ENCODE measurements at regions of chr19 and their contacts with region 1.

Region 1: GRCh38 chr19:50777754-50778303 is 7.6 kb downstream of the GPR32 start:
- DNase-seq: no peak
- ATAC-seq: no peak
- H3K4me3 Mint-ChIP-seq: no peak overlapping the region
- H3K27ac Mint-ChIP-seq: no peak overlapping the region
- H3K4me1 Mint-ChIP-seq: peaks cover 3% of the 10 kb centered on the region
- H3K27me3 Mint-ChIP-seq: peaks cover 55% of the 10 kb centered on the region
- CTCF ChIP-seq: no peak

Region 2: DNA sequence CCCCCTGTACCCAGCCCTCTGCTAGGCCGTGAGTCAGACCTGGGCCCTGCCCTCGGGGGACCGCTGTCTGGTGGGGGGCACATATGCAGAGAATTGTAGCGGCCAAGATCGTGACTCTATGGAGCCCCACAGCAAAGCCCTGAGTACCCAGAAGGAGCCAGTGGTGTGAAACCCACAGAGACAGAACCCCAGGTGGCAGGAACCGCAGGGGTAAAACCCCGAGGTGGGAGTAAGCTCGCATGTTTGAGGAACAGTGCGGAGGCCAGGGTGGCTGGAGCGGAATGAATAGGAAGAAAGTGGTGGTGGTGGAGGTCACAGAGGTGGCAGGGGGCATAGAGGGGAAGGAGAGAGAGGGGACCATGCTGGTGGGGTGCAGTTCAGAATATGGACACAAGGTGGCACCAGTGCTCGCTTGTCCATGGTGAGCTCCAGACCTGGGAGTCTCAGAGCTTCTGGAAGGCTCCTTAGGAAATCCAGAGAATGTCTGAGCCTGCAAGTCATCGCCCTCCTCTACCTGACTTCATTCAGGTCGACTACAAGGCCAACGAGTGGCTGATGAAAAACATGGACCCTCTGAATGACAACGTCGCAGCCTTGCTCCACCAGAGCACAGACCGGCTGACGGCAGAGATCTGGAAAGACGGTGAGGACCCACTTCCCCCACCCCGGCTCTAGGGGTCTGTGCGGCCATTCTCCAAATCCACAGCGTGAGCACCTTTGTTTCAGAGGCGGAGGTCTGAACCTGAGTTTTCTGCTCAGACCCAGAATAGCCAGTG is 525.5 kb before region 1 on chr19:
- CTCF ChIA-PET with region 1: interaction called, 8 read pairs
- POLR2A ChIA-PET with region 1: no interaction called
- intact Hi-C with region 1: loop called (anchors 1 kb)
- DNase-seq: peak; percentile 40
- ATAC-seq: peak; percentile 64
- H3K4me3 Mint-ChIP-seq: no peak overlapping the region
- H3K27ac Mint-ChIP-seq: no peak overlapping the region
- H3K4me1 Mint-ChIP-seq: peaks cover 5% of the 10 kb centered on the region
- H3K27me3 Mint-ChIP-seq: peaks cover 15% of the 10 kb centered on the region
- CTCF ChIP-seq: no peak

Region 3: GRCh38 chr19:50368649-50369570 is 408.9 kb before region 1 on chr19:
- CTCF ChIA-PET with region 1: no interaction called
- POLR2A ChIA-PET with region 1: no interaction called
- intact Hi-C with region 1: loop called (anchors 1 kb)
- DNase-seq: peak; percentile 78
- ATAC-seq: peak; percentile 79
- H3K4me3 Mint-ChIP-seq: peak overlapping the region; percentile 90
- H3K27ac Mint-ChIP-seq: peak overlapping the region; percentile 87
- H3K4me1 Mint-ChIP-seq: peaks cover 39% of the 10 kb centered on the region
- H3K27me3 Mint-ChIP-seq: no peaks in the 10 kb centered on the region
- CTCF ChIP-seq: no peak

Region 4: DNA sequence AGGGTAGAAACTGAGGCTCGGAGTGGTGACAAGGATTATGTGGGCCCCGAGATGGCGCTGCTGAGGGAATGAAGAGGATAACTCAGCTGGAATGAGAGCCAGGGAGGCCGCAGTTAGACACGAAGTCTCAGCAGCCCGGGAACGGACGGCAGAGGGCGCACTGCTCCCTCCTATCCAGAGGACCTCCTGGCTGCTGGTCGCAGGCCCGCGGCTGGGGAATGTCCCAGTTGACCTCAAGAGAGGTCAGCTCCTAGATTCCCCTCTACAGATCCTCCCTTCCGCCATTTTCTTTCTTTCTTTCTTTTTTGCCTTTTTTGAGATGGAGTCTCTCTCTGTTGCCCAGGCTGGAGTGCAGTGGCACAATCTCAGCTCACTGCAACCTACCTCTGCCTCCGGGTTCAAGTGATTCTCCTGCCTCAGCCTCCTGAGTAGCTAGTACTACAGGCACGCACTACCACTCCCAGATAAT is 240.0 kb before region 1 on chr19:
- CTCF ChIA-PET with region 1: interaction called, 15 read pairs
- POLR2A ChIA-PET with region 1: no interaction called
- intact Hi-C with region 1: loop called (anchors 1 kb)
- DNase-seq: peak; percentile 41
- ATAC-seq: no peak
- H3K4me3 Mint-ChIP-seq: no peak overlapping the region
- H3K27ac Mint-ChIP-seq: no peak overlapping the region
- H3K4me1 Mint-ChIP-seq: no peaks in the 10 kb centered on the region
- H3K27me3 Mint-ChIP-seq: peaks cover 16% of the 10 kb centered on the region
- CTCF ChIP-seq: no peak

Region 5: GRCh38 chr19:50607874-50608785 is 169.7 kb before region 1 on chr19:
- CTCF ChIA-PET with region 1: no interaction called
- POLR2A ChIA-PET with region 1: no interaction called
- intact Hi-C with region 1: loop called (anchors 5 kb)
- DNase-seq: peak; percentile 46
- ATAC-seq: peak; percentile 89
- H3K4me3 Mint-ChIP-seq: peak overlapping the region; percentile 32
- H3K27ac Mint-ChIP-seq: no peak overlapping the region
- H3K4me1 Mint-ChIP-seq: peaks cover 15% of the 10 kb centered on the region
- H3K27me3 Mint-ChIP-seq: peaks cover 30% of the 10 kb centered on the region
- CTCF ChIP-seq: no peak

Region 6: DNA sequence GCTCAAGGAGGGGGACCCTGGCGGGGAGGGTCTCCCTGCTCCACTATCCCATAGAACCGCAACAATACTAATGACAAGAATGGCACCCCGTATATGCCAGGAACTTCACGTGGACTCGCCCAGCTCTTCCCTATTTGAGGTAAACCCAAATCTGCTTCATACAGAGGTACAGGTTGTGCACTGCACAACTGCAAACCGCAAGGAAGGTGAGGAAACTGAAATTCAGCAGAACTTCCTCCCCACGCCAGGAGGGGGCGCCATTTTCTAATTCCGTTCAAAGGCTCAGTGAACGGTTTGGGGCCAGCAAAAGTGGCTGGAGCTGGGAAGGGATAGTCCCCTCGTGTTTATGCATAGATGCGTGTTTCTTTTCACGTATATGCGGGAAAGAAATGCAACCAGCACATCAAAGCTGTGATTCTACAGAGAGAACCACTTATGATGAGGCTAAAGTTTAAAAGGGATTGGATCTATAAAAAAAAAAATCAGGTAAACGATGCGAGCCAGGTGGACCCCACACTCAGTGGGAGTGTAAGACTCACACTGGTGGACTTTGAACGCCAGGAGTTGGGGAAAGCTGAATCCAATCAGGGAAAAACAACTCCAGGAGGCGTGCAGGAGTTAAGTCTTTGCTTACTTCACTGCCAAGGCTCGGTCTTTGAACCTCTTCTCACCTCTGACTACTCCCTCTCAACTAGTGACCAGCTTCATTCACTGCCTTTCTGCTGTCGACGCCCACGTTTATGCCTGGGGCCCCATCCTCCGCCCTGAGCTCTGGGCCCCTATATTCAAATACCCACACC is 108.3 kb before region 1 on chr19:
- CTCF ChIA-PET with region 1: no interaction called
- POLR2A ChIA-PET with region 1: no interaction called
- intact Hi-C with region 1: loop called (anchors 1 kb)
- DNase-seq: peak; percentile 34
- ATAC-seq: peak; percentile 31
- H3K4me3 Mint-ChIP-seq: no peak overlapping the region
- H3K27ac Mint-ChIP-seq: no peak overlapping the region
- H3K4me1 Mint-ChIP-seq: peaks cover 4% of the 10 kb centered on the region
- H3K27me3 Mint-ChIP-seq: peaks cover 44% of the 10 kb centered on the region
- CTCF ChIP-seq: peak; percentile 73

Region 7: DNA sequence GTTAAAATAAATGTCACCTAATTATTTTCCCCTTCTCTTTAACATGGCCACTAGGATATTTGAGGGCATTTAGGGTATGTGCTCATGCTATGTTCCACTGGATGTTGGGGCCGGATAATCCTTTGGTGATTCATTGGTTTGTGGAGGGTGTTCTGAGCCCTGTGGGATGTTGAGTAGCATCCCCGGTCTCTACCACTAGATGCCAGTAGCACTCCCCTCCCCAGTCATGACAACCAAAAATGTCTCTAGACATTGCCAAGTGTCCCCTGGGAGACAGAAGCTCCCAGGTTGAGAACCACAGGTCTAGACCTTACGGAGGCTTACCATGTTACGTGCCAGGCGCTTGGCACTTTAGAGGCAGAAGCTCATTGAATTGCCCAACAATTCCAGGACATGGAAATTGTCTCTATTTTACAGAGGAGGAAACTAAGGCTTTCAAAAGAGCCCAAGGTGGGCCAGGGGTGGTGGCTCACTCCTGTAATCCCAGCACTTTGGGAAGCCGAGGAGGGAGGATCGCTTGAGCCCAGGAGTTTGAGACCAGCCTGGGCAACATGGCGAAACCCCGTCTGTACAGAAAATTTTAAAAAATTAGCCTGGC is 72.3 kb before region 1 on chr19:
- CTCF ChIA-PET with region 1: no interaction called
- POLR2A ChIA-PET with region 1: no interaction called
- intact Hi-C with region 1: loop called (anchors 1 kb)
- DNase-seq: no peak
- ATAC-seq: peak; percentile 89
- H3K4me3 Mint-ChIP-seq: no peak overlapping the region
- H3K27ac Mint-ChIP-seq: no peak overlapping the region
- H3K4me1 Mint-ChIP-seq: peaks cover 3% of the 10 kb centered on the region
- H3K27me3 Mint-ChIP-seq: peaks cover 31% of the 10 kb centered on the region
- CTCF ChIP-seq: no peak

Region 8: GRCh38 chr19:50890422-50891252 is 112.8 kb after region 1 on chr19:
- CTCF ChIA-PET with region 1: no interaction called
- POLR2A ChIA-PET with region 1: no interaction called
- intact Hi-C with region 1: no loop called
- DNase-seq: no peak
- ATAC-seq: peak; percentile 72
- H3K4me3 Mint-ChIP-seq: peak overlapping the region; percentile 5
- H3K27ac Mint-ChIP-seq: peak overlapping the region; percentile 62
- H3K4me1 Mint-ChIP-seq: peaks cover 43% of the 10 kb centered on the region
- H3K27me3 Mint-ChIP-seq: peaks cover 4% of the 10 kb centered on the region
- CTCF ChIP-seq: no peak

Measured in activated B cell treated with CpG ODN at 0.5 μM for 24 hours (primary cell).